Activated T-helper 1 cell treated with anti-CD3 and anti-CD28 coated beads, Interleukin-12 subunit alpha, Interleukin-12 subunit beta, Interleukin-2, Interleukin-4 antibody, amounts not matched to agents 30 ng/mL and 10 ng/mL and 1 ng/mL, durations not matched to agents 14 hours and 24 hours and 36 hours (primary cell): ENCODE measurements at regions of chr10 and their contacts with region 1.

Region 1: DNA sequence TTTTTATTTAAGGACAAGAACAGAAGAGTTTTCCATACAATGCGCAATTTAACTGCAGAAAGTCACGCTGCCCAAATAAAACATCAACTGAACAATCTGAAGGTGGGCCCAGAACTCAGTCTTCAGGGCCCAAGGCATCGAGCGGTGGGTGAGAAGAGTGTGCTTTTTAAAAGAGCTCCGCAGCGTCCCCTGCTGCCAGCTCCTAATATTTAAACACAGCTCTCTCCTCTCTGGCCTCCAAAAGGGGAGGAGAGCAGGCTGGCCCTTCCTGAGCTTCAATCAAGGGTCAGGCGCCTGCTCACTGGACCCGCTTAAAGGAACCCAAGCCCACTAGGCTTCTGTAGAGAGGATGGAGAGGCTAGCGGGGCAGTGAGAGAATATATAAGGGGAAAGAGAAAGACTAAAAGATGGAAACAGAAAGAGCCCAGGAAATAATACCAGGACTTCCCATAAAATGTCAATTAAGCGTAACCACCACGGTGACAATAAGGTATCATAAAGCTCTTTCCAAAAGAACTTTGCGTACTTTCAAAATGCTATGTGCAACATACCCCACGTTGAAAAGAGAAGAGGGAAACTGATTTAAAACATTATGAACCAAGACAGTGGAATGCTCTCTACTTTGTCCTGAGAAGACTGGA is 2.8 kb downstream of the FAM53B start:
- DNase-seq: peak; percentile 57
- H3K4me3 Mint-ChIP-seq: peak overlapping the region; percentile 97
- H3K27ac Mint-ChIP-seq: peak overlapping the region; percentile 76
- H3K4me1 Mint-ChIP-seq: peaks cover 56% of the 10 kb centered on the region
- H3K27me3 Mint-ChIP-seq: peaks cover 7% of the 10 kb centered on the region

Region 2: GRCh38 chr10:124418726-124419501 is 322.5 kb before region 1 on chr10 and contains the start of gene OAT:
- intact Hi-C with region 1: loop called (anchors 1 kb)
- DNase-seq: peak; percentile 95
- H3K4me3 Mint-ChIP-seq: peak within 1 kb of the TSS; percentile 81
- H3K27ac Mint-ChIP-seq: peak within 1 kb of the TSS; percentile 29
- H3K4me1 Mint-ChIP-seq: peaks cover 12% of the 10 kb centered on the region
- H3K27me3 Mint-ChIP-seq: peaks cover 22% of the 10 kb centered on the region
- total RNA-seq, gene OAT: 35.6 and 37.9 TPM in 2 replicates

Region 3: GRCh38 chr10:124539935-124540641 is 201.3 kb before region 1 on chr10:
- intact Hi-C with region 1: loop called (anchors 1 kb)
- DNase-seq: peak; percentile 34
- H3K4me3 Mint-ChIP-seq: no peak overlapping the region
- H3K27ac Mint-ChIP-seq: no peak overlapping the region
- H3K4me1 Mint-ChIP-seq: no peaks in the 10 kb centered on the region
- H3K27me3 Mint-ChIP-seq: peaks cover 4% of the 10 kb centered on the region

Region 4: GRCh38 chr10:124626759-124627380 is 114.5 kb before region 1 on chr10:
- intact Hi-C with region 1: loop called (anchors 1 kb)
- DNase-seq: peak; percentile 42
- H3K4me3 Mint-ChIP-seq: peak overlapping the region; percentile 42
- H3K27ac Mint-ChIP-seq: peak overlapping the region; percentile 45
- H3K4me1 Mint-ChIP-seq: peaks cover 31% of the 10 kb centered on the region
- H3K27me3 Mint-ChIP-seq: peaks cover 13% of the 10 kb centered on the region

Region 5: GRCh38 chr10:124647421-124648130 is 93.8 kb before region 1 on chr10:
- intact Hi-C with region 1: loop called (anchors 1 kb)
- DNase-seq: peak; percentile 67
- H3K4me3 Mint-ChIP-seq: peak overlapping the region; percentile 45
- H3K27ac Mint-ChIP-seq: peak overlapping the region; percentile 85
- H3K4me1 Mint-ChIP-seq: peaks cover 78% of the 10 kb centered on the region
- H3K27me3 Mint-ChIP-seq: no peaks in the 10 kb centered on the region

Region 6: GRCh38 chr10:124717911-124718741 is 23.3 kb before region 1 on chr10:
- intact Hi-C with region 1: loop called (anchors 1 kb)
- DNase-seq: peak; percentile 64
- H3K4me3 Mint-ChIP-seq: peak overlapping the region; percentile 73
- H3K27ac Mint-ChIP-seq: peak overlapping the region; percentile 79
- H3K4me1 Mint-ChIP-seq: peaks cover 88% of the 10 kb centered on the region
- H3K27me3 Mint-ChIP-seq: peaks cover 6% of the 10 kb centered on the region

Region 7: GRCh38 chr10:124802313-124802675 is 60.9 kb after region 1 on chr10:
- intact Hi-C with region 1: loop called (anchors 2 kb)
- DNase-seq: no peak
- H3K4me3 Mint-ChIP-seq: peak overlapping the region; percentile 95
- H3K27ac Mint-ChIP-seq: peak overlapping the region; percentile 89
- H3K4me1 Mint-ChIP-seq: peaks cover 19% of the 10 kb centered on the region
- H3K27me3 Mint-ChIP-seq: peaks cover 6% of the 10 kb centered on the region